ENCODE measurements at regions of chr13 and their contacts with region 1.

Region 1: GRCh38 chr13:75694722-75695121 is 58.6 kb downstream of the LMO7 start:
- DNase-seq: no peak
- H3K4me3 ChIP-seq: no peak overlapping the region
- H3K27ac ChIP-seq: no peak overlapping the region
- H3K27me3 ChIP-seq: no peaks in the 10 kb centered on the region
- CTCF ChIP-seq: no peak

Region 2: GRCh38 chr13:75256922-75257321 is 437.8 kb before region 1 on chr13:
- CTCF ChIA-PET with region 1: no interaction called
- POLR2A ChIA-PET with region 1: no interaction called
- DNase-seq: no peak
- H3K4me3 ChIP-seq: no peak overlapping the region
- H3K27ac ChIP-seq: no peak overlapping the region
- H3K27me3 ChIP-seq: no peaks in the 10 kb centered on the region
- CTCF ChIP-seq: no peak

Region 3: GRCh38 chr13:75675421-75675820 is 19.3 kb before region 1 on chr13:
- CTCF ChIA-PET with region 1: interaction called, 17 read pairs
- POLR2A ChIA-PET with region 1: no interaction called
- DNase-seq: no peak
- H3K4me3 ChIP-seq: no peak overlapping the region
- H3K27ac ChIP-seq: no peak overlapping the region
- H3K27me3 ChIP-seq: no peaks in the 10 kb centered on the region
- CTCF ChIP-seq: no peak

Region 4: DNA sequence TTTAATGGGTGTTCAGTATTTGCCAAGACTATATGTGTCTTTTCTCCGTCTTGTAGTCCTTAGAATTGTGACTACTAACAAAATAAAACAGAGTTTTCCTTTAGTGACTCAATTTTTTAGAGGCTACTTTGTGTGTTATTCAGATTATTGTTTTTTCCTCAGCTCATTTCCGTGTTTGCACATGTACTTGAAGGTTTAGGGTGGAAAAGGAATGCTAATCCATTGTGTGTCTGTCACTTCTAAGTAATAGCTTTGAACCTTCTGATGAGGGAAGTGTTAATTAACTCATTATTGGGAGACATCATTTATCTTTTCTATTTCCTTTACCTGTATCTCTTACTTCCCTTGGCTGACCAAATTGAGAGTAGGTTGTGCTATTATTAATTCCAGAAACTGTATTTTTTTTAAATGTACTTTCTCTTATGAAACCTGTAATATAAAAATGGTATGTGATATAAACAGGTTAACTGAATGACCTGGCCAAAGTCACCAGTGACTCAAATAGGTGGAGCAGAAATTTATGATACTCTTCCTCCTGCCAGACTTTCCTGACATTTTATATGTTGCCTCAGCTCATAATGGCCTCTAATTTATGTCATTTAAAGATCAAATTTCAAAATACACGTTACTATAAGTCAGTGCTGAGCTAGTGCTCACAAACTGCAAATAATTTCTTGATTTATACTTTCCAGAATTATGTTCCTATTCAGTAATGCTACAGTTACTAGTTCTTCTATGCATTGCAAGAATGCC is 30.2 kb after region 1 on chr13:
- CTCF ChIA-PET with region 1: interaction called, 15 read pairs
- POLR2A ChIA-PET with region 1: no interaction called
- DNase-seq: no peak
- H3K4me3 ChIP-seq: no peak overlapping the region
- H3K27ac ChIP-seq: no peak overlapping the region
- H3K27me3 ChIP-seq: no peaks in the 10 kb centered on the region
- CTCF ChIP-seq: no peak

Region 5: GRCh38 chr13:75782985-75783384 is 88.3 kb after region 1 on chr13:
- CTCF ChIA-PET with region 1: interaction called, 13 read pairs
- POLR2A ChIA-PET with region 1: interaction called, 3 read pairs
- DNase-seq: no peak
- H3K4me3 ChIP-seq: no peak overlapping the region
- H3K27ac ChIP-seq: no peak overlapping the region
- H3K27me3 ChIP-seq: no peaks in the 10 kb centered on the region
- CTCF ChIP-seq: no peak

Region 6: DNA sequence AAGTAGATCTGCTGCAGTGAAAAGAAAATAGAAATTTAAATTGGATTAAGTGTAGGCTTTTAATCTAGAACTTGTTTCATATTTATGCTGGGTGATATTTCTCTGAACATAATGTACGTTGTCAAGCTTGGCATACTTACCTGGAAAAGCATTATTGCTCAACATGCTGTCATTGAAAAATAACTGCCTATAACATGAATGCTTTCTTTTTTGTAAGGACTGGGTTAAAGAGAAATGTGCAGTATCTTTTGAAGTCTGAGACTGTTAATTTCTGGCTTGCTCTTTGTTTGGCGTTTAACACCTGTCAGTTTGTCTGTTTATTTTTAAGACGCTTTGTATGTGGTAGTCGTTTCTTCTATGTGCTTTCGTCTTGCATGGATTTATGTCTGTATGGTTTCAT is 116.6 kb after region 1 on chr13:
- CTCF ChIA-PET with region 1: interaction called, 23 read pairs
- POLR2A ChIA-PET with region 1: no interaction called
- DNase-seq: no peak
- H3K4me3 ChIP-seq: no peak overlapping the region
- H3K27ac ChIP-seq: no peak overlapping the region
- H3K27me3 ChIP-seq: no peaks in the 10 kb centered on the region
- CTCF ChIP-seq: no peak

Region 7: DNA sequence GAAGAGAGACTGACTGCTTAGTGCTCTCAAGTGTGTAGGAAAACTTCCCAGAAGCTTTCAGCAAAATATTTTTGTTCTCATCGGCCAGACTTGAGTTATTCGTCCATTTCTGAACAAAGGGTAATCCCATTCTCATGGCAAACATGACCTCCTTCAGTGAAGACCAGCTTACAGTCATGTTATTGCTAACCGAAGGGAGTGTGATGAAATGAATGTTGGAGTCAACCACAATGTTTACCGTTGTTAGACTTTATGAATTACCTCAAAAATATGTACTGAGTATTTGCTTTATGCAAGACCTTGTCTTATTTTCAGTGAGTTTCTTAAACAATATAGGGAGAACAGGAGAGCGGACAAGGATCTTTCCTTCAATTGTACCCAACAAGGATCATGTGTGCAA is 170.0 kb after region 1 on chr13:
- CTCF ChIA-PET with region 1: interaction called, 105 read pairs
- POLR2A ChIA-PET with region 1: no interaction called
- DNase-seq: peak; percentile 76
- H3K4me3 ChIP-seq: no peak overlapping the region
- H3K27ac ChIP-seq: peak overlapping the region; percentile 34
- H3K27me3 ChIP-seq: no peaks in the 10 kb centered on the region
- CTCF ChIP-seq: no peak

Region 8: DNA sequence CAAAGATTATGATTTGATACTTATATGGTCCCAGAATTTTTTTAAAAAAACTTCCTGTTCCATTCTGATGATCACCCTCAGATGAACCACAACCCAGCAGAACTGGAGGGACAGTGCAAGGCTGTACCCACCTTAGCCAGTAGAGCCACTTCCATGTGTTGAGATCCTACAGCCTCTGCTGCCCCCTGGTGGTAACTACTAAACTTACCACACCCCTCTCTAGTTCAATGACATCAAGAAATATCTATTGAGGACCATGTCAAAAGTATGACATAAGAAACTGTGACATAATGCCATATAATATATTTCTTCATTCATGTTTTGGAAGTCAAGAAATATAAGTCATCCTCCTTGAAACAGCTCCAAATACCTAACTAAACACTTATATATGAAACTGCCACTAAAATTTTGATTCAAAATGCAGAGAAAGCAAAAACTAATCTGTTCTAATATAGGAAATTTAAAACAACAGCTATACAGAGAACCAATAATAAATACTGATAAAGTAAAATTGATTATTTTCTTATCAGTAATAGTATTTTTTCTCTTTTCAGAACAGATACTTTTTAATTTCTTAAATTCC is 778.9 kb after region 1 on chr13:
- CTCF ChIA-PET with region 1: interaction called, 10 read pairs
- POLR2A ChIA-PET with region 1: no interaction called
- DNase-seq: peak; percentile 52
- H3K4me3 ChIP-seq: no peak overlapping the region
- H3K27ac ChIP-seq: no peak overlapping the region
- H3K27me3 ChIP-seq: peaks cover 2% of the 10 kb centered on the region
- CTCF ChIP-seq: peak; percentile 86